ENCODE measurements at regions of chr3 and their contacts with region 1.

Region 1: DNA sequence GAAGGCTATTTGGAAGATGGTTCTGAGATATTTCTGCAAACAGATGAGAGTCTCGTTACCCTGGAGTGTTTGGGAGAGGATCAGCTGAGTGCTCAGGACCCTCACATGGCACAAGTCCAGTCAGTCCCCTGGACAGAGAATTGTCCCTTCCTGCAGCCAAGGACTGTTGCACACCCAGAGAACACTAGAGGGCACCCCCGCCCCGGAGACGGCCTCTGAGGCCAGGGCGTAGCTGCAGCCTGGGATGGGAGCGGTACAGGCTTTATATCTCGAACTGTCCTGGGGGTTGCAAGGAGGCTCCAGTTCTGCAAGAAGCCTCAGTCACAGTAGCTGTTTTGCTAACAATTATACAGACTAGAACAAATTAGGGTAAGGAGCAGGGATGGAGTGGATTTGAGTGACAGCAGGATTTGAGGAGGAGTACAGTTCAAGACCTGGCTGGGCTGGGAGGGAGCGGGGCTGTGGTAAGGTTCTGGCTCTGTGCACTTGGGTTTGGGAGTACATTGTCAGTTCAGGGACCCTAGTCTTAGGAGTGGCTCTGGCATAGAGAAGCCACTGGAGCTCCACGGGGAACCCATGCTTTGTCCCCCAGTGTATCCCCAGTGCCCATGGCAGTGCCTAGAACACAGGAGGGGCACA is 67.6 kb upstream of the HACD2 start:
- DNase-seq: peak; percentile 90
- ATAC-seq: peak; percentile 92

Region 2: GRCh38 chr3:122245513-122246174 is 1406.8 kb before region 1 on chr3:
- intact Hi-C with region 1: loop called (anchors 5 kb)
- DNase-seq: no peak
- ATAC-seq: no peak

Region 3: GRCh38 chr3:122727294-122727693 is 925.2 kb before region 1 on chr3:
- intact Hi-C with region 1: no loop called
- DNase-seq: no peak
- ATAC-seq: no peak

Region 4: DNA sequence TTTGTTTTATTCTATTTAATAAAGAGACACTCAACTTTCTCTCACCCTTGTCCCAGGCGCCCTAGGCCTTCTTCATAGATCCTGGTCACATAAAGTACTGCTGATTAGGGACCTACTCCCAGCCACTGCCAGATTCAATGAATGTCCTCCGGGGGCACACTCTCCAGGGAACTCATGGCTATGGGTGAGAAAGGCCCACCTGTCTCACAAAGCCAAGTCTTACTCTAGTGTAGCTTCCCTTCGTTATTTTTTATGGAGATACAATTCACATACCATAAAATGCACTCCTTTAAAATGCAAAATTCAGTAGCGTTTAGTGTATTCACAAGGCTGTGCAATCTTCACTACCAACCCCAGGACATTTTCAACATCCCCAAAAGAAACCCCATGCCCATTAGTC is 291.4 kb before region 1 on chr3:
- intact Hi-C with region 1: no loop called
- DNase-seq: no peak
- ATAC-seq: no peak

Region 5: GRCh38 chr3:123618768-123619484 is 33.5 kb before region 1 on chr3:
- intact Hi-C with region 1: no loop called
- DNase-seq: peak; percentile 86
- ATAC-seq: peak; percentile 60

Region 6: DNA sequence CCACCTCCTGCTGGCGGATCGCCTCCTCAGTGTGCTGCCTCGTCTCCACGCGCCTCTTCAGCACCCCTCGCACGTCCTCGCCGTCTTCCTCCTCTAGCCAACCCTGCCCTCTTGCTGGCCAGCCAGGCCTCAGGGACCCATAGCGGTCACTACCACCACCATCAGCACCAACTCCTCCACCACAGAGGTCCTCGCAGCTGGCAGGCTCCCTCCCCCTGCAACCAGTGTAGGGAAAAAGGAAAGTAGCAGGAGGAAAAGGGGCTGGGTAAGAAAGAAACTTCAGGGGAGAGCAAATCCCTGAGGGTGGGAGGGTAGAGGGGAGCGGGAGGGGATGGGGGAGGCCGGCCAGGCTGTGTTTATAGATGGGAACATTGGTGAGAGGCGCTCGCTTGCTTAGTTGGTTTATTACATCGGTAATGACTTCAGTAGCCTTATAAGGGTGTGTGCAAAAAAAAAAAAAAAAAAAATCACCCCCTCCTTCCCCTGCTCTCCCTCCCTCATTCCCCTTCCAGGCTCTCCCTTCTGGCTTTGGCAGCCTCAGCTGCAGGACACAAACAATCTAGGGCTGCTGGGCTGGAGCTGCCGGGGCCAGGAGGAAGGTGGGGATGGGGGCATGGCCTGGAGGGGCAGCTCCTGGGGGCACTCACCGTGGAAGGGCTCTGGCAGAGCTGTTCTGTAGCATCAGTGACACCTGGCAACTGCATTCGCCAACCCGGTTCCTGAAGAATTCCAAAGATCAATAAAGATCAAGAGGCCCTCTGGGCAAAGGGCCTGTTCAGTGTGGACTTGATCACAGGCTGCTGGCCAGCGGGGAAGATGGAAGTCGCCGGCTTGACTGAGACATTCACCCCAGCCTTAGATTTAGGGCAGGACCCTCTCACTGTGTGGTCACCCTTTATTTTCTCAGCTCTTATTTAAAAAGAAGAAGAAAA is 48.6 kb after region 1 on chr3:
- intact Hi-C with region 1: loop called (anchors 5 kb)
- DNase-seq: no peak
- ATAC-seq: peak; percentile 72

Region 7: GRCh38 chr3:123723522-123724168 is 71.2 kb after region 1 on chr3:
- intact Hi-C with region 1: loop called (anchors 5 kb)
- DNase-seq: no peak
- ATAC-seq: peak; percentile 38

Measured in sciatic nerve (tissue), 2 donors.